Right ventricle myocardium superior (tissue), 1 donor: ENCODE measurements at regions of chr1 and their contacts with region 1.

Region 1: DNA sequence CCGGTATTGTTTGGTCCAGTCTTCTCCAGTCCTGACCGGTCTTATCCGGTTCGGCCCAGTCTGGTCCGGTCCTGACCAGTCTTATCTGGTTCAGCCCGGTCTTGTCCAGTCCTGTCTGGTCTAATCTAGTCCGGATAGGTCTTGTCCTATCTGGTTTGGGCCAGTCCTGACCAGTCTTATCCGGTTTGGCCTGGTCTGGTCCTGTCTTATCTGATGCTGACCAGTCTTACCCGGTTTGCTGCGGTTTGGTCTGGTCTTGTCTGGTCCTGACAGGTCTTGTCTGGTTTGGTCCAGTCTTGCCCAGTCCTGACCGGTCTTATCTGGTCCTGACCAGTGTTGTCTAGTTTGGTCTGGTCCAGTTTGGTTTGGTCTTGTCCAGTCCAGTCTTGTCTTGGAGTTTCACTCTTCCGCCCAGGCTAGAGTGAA is 30.1 kb downstream of the DHX9 start:
- DNase-seq: no peak
- ATAC-seq: no peak

Region 2: DNA sequence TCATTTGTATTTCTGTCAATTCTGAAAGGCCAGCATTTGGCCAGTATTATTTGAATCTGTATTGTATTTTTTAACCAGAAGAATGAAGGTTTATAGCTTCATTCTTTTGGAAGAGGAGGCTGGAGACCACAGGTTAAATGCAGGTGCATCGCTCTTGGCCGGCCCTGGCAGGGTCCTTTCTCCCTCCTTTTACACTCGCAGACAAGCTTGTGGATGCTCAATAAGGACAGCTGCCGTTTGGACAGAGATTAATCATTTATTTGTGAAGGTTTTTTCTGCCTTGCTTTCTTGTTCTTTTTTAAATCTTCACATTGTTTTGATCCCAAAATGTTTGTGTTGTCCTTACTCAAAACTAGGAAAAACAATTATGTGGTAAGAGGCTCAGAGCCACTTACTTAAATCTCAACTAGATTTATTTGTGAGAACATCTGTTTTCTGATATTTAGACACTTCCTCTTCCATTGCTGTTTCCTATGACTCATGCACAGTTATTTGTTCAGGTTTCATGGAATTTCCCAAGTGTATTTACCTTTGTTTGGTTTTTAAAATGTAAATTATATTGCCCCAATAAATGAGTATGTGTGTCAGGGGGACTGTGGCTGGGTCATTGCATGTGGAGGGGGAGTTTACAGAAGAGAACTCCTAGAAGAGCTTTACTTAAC is 270.2 kb after region 1 on chr1:
- intact Hi-C with region 1: loop called (anchors 10 kb)
- DNase-seq: no peak
- ATAC-seq: no peak